ENCODE measurements at regions of chr20 and their contacts with region 1.

Region 1: DNA sequence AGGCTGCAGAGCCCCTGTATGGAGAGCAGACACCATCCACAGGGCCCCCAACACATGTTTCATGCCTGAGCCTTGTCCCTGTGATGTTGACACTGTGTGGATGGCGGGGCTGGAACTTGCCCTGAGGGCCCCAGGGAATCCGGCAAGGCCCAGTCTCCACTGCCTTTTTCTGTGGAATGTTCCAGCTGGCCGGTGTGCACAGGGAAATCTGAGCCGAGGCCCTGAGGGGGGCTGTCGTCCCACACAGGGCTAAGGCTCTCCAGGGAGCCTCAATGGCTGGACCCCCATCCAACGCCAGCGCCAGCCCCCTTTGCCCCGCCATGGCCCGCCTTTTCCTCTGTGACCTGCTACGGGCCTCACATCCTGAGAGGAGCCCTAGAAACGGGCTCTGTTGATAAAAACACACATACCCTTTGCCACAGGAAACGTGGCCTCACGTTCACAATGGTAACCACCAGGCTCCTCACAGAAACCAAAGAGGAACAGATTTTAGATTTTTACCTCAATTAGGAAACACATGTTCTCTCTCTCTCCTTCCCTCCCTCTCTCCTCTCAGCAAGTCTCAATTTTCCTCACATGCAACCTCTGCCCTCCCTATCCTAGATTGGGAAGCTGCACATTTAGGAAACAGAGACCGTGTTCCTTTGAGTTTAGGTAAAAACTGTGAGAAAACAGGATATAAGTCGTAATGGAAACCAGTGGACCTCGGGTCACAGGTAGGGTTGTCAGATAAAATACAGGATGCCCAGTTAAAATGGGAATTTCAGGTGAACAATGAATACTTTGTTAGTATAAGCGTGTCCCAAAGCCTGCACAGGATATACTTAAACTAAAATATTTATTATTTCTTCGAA is 13.7 kb upstream of the ZNF831 start:
- DNase-seq: peak; percentile 66 to 96 (median 77)
- ATAC-seq: peak; percentile 74
- H3K4me3 ChIP-seq: peak overlapping the region in 1 of 2 experiments; percentile 21
- H3K4me3 Mint-ChIP-seq: peak overlapping the region; percentile 71
- H3K27ac ChIP-seq: peak overlapping the region; percentile 90 to 94
- H3K27ac Mint-ChIP-seq: peak overlapping the region; percentile 95
- H3K4me1 ChIP-seq: peaks cover 94% of the 10 kb centered on the region
- H3K4me1 Mint-ChIP-seq: peaks cover 94% of the 10 kb centered on the region
- H3K27me3 ChIP-seq: no peaks in the 10 kb centered on the region
- H3K27me3 Mint-ChIP-seq: no peaks in the 10 kb centered on the region
- CTCF ChIP-seq: no peak

Region 2: GRCh38 chr20:59102841-59103299 is 47.0 kb before region 1 on chr20:
- CTCF ChIA-PET with region 1: no interaction called
- POLR2A ChIA-PET with region 1: no interaction called
- intact Hi-C with region 1: loop called in 1 of 2 experiments (anchors 5 kb)
- DNase-seq: peak in 1 of 9 experiments; percentile 12
- ATAC-seq: peak; percentile 20
- H3K4me3 ChIP-seq: no peak overlapping the region
- H3K4me3 Mint-ChIP-seq: no peak overlapping the region
- H3K27ac ChIP-seq: no peak overlapping the region
- H3K27ac Mint-ChIP-seq: no peak overlapping the region
- H3K4me1 ChIP-seq: peaks cover 9% of the 10 kb centered on the region
- H3K4me1 Mint-ChIP-seq: peaks cover 15% of the 10 kb centered on the region
- H3K27me3 ChIP-seq: peaks cover 0 to 2% of the 10 kb centered on the region in 2 experiments
- H3K27me3 Mint-ChIP-seq: no peaks in the 10 kb centered on the region
- CTCF ChIP-seq: no peak

Measured in CD8-positive, alpha-beta T cell (primary cell).